Mammary epithelial cell (primary cell): ENCODE measurements at regions of chr9 and their contacts with region 1.

Region 1: DNA sequence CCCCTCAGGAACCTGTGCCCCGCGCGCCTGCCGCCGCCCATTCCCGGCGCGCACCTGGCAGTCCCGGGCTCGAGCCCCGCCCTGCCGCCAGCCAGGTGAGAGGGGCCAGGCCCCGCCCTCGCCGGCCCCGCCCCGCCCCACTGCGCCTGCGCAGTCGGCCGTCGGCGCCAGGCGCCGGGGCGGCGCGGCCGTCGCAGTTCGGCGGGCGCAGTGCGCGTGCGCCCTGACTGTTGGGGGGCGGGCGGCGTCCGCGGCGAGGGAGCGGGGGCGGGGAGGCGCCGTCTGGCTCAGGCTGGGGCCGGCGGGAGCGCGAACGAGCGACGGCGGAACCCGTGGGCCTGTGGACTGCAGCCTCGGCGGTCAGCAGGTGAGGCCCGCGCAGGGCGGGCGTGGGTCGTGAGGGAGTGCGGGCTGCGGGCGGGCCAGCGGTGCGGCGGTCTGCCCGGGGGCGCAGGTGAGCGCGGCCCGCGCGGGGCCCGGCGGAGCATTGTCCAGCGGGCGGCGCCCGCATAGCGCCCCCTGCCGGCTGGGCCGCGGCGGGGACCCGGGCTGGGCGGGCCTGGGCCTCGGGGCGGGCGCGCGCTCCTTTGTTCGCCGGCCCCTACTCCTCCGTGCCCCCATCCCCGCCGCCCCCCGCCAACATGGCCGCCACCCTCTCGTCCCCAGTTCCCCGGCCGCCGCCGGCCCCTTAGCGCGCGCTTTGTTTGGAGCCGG is at the start of gene SPIN1:
- DNase-seq: no peak
- H3K4me3 ChIP-seq: peak within 1 kb of the TSS; percentile 64 to 93 (median 77)
- H3K27ac ChIP-seq: peak within 1 kb of the TSS; percentile 91
- H3K4me1 ChIP-seq: peaks cover 18% of the 10 kb centered on the region
- H3K27me3 ChIP-seq: no peaks in the 10 kb centered on the region
- CTCF ChIP-seq: peak; percentile 28 to 35
- total RNA-seq, gene SPIN1: 86.7 to 98.2 TPM

Region 2: GRCh38 chr9:88106491-88106890 is 281.8 kb before region 1 on chr9:
- CTCF ChIA-PET with region 1: no interaction called
- dilution Hi-C with region 1: no loop called
- in situ Hi-C with region 1: no loop called
- intact Hi-C with region 1: loop called (anchors 1 kb)
- DNase-seq: peak; percentile 40
- H3K4me3 ChIP-seq: no peak overlapping the region
- H3K27ac ChIP-seq: no peak overlapping the region
- H3K4me1 ChIP-seq: no peaks in the 10 kb centered on the region
- H3K27me3 ChIP-seq: no peaks in the 10 kb centered on the region
- CTCF ChIP-seq: peak; percentile 64 to 73

Region 3: DNA sequence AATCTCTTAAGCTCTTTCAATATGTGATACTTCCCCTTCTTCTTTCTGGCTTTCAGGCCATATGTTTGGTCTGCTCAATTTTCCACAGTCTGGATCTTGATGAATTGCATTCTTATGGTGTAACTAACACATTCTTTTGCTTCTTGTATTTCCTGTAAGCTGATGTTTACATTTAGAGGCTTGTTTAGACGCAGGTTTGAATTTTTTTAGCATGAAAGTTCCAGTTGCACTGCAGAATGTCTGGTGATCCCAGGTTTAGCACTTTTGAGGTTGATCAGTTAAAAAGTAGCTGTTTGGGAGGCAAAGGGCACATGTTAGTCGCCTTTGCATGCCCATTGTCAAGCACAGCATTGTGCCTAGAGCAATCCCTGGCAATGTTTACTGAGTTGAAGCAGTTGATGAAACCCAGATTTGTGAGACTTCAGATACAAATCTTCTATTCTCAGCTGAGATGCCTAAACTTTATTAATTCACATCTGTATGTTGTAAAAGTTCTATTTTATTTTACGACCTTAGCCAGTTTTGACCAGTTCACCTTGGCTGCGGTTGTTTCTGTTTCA is 190.5 kb before region 1 on chr9:
- CTCF ChIA-PET with region 1: no interaction called
- dilution Hi-C with region 1: loop called (anchors 25 kb)
- in situ Hi-C with region 1: loop called in 1 of 2 experiments (anchors 25 kb)
- intact Hi-C with region 1: no loop called
- DNase-seq: peak; percentile 61
- H3K4me3 ChIP-seq: no peak overlapping the region
- H3K27ac ChIP-seq: peak overlapping the region; percentile 36
- H3K4me1 ChIP-seq: peaks cover 21% of the 10 kb centered on the region
- H3K27me3 ChIP-seq: no peaks in the 10 kb centered on the region
- CTCF ChIP-seq: no peak

Region 4: DNA sequence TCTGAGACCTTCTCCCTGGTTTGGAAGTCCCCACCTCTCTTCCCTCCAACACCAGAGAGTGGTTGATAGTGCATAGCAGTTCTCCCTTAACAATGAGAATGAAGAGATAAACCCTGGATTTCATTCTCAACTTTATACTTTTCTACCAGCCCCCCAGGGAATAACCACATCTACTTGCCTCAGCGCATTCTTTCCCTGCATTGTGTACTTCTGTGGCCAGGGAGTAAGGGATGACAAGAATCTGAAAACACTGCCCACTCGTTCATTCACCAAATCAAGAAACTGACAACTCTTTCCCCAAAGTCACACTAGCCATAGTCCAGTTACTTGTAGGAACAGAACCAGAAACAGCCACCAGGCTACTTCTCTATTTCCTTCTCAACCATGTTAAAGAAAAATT is 46.1 kb before region 1 on chr9:
- CTCF ChIA-PET with region 1: no interaction called
- dilution Hi-C with region 1: no loop called
- in situ Hi-C with region 1: no loop called
- intact Hi-C with region 1: loop called (anchors 5 kb)
- DNase-seq: peak; percentile 25
- H3K4me3 ChIP-seq: no peak overlapping the region
- H3K27ac ChIP-seq: no peak overlapping the region
- H3K4me1 ChIP-seq: peaks cover 18% of the 10 kb centered on the region
- H3K27me3 ChIP-seq: no peaks in the 10 kb centered on the region
- CTCF ChIP-seq: no peak

Region 5: GRCh38 chr9:88534456-88535261 is 146.3 kb after region 1 on chr9 and contains the start of gene NXNL2:
- CTCF ChIA-PET with region 1: no interaction called
- dilution Hi-C with region 1: no loop called
- in situ Hi-C with region 1: no loop called
- intact Hi-C with region 1: loop called (anchors 1 kb)
- DNase-seq: peak; percentile 56
- H3K4me3 ChIP-seq: peak within 1 kb of the TSS; percentile 55 to 70 (median 64)
- H3K27ac ChIP-seq: no peak within 1 kb of the TSS
- H3K4me1 ChIP-seq: peaks cover 20% of the 10 kb centered on the region
- H3K27me3 ChIP-seq: no peaks in the 10 kb centered on the region
- CTCF ChIP-seq: no peak
- total RNA-seq, gene NXNL2: 0.31 to 1.0 TPM